Activated CD4-positive, alpha-beta T cell treated with anti-CD3 and anti-CD28 coated beads for 36 hours (primary cell): ENCODE measurements at regions of chr12 and their contacts with region 1.

Region 1: DNA sequence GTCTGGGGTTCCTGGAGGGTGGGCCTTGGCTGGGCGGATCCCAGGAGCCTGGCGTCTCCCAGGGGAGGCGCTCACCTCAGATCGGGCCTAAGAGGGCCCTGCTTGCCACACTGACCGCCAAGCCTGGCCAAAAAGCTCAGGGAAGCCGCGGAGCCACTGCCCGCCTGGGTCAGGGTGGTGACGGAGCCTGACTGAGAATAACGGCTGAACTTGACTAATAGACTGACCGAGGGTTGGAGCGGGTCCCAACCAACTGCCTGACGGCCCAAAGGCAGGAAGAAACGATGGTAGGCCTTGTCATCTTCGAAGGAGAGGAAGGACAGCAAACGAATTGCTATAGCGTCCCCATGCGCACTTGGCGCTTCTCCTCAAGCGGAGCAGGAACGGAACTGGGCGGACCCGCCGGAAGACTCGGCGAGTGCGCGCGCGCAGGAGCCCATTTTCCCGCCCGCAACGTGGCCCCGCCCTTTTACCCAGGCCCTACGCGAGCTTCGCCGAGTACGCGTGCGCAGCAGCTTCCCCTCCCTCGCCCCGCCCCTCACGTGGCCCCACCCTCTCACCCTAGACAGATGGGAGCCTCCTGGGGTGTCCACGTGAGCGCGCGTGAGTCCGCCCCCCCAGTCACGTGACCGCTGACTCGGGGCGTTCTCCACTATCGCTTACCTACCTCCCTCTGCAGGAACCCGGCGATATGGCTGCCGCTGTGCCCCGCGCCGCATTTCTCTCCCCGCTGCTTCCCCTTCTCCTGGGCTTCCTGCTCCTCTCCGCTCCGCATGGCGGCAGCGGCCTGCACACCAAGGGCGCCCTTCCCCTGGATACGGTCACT is at the starts of genes ERP29 and TMEM116:
- DNase-seq: peak; percentile 100
- ATAC-seq: peak; percentile 80
- H3K4me3 Mint-ChIP-seq: peak within 1 kb of the TSS; percentile 98
- H3K27ac Mint-ChIP-seq: peak within 1 kb of the TSS; percentile 99
- H3K4me1 Mint-ChIP-seq: peaks cover 53% of the 10 kb centered on the region
- H3K27me3 Mint-ChIP-seq: no peaks in the 10 kb centered on the region
- total RNA-seq, gene ERP29: 79.7 to 87.3 TPM
- total RNA-seq, gene TMEM116: 11.2 to 12.5 TPM

Region 2: GRCh38 chr12:111589601-111590000 is 423.4 kb before region 1 on chr12:
- CTCF ChIA-PET with region 1: no interaction called
- POLR2A ChIA-PET with region 1: no interaction called
- intact Hi-C with region 1: no loop called
- DNase-seq: no peak
- ATAC-seq: no peak
- H3K4me3 Mint-ChIP-seq: no peak overlapping the region
- H3K27ac Mint-ChIP-seq: no peak overlapping the region
- H3K4me1 Mint-ChIP-seq: peaks cover 11% of the 10 kb centered on the region
- H3K27me3 Mint-ChIP-seq: no peaks in the 10 kb centered on the region

Region 3: GRCh38 chr12:111599459-111600204 is 413.4 kb before region 1 on chr12:
- CTCF ChIA-PET with region 1: no interaction called
- POLR2A ChIA-PET with region 1: no interaction called
- intact Hi-C with region 1: loop called in 1 of 2 experiments (anchors 1 kb)
- DNase-seq: peak; percentile 91
- ATAC-seq: peak; percentile 83
- H3K4me3 Mint-ChIP-seq: peak overlapping the region; percentile 81
- H3K27ac Mint-ChIP-seq: peak overlapping the region; percentile 92
- H3K4me1 Mint-ChIP-seq: peaks cover 17% of the 10 kb centered on the region
- H3K27me3 Mint-ChIP-seq: no peaks in the 10 kb centered on the region

Region 4: GRCh38 chr12:111841750-111842555 is 171.0 kb before region 1 on chr12 and contains the start of gene MAPKAPK5:
- CTCF ChIA-PET with region 1: interaction called, 3 read pairs
- POLR2A ChIA-PET with region 1: no interaction called
- intact Hi-C with region 1: loop called (anchors 1 to 2 kb)
- DNase-seq: peak; percentile 97
- ATAC-seq: peak; percentile 81
- H3K4me3 Mint-ChIP-seq: peak within 1 kb of the TSS; percentile 87
- H3K27ac Mint-ChIP-seq: peak within 1 kb of the TSS; percentile 96
- H3K4me1 Mint-ChIP-seq: peaks cover 50% of the 10 kb centered on the region
- H3K27me3 Mint-ChIP-seq: no peaks in the 10 kb centered on the region
- total RNA-seq, gene MAPKAPK5: 47.5 to 57.5 TPM

Region 5: DNA sequence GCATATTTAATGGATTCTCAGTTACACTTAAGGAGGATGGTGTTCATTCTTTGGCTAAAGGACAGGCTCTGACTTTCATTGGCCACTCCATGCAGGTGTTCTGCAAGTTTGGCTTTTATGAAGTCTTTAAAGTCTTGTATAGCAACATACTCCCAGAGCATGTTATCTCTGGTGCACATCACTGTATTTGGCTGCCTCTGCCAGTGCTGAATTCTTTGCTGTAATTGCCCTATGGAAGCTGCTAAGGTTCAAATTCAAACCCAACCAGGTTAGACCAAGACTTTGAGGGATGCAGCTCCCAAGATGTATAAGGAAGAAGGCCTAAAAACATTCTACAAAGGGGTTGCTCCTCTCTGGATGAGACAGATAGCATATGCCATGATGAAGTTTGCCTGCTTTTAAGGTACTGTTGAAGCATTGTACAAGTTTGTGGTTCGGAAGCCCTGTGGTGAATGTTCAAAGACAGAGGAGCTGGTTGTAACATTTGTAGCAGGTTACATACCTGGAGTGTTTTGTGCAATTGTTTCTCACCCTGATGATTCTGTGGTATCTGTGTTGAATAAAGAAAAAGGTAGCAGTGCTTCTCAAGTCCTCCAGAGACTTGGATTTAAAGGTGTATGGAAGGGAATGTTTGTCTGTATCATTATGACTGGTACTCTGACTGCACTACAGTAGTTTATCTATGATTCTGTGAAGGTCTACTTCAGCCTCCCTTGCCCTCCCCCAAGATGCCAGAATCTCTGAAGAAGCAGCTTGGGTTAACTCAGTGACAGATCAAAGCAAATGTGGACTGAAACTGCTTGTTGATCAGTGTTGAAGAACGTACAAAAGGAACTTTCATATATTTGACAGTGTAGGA is 19.5 kb before region 1 on chr12:
- CTCF ChIA-PET with region 1: interaction called, 10 read pairs
- POLR2A ChIA-PET with region 1: interaction called, 10 read pairs
- intact Hi-C with region 1: loop called (anchors 1 kb)
- DNase-seq: peak; percentile 40
- ATAC-seq: peak; percentile 75
- H3K4me3 Mint-ChIP-seq: peak overlapping the region; percentile 68
- H3K27ac Mint-ChIP-seq: peak overlapping the region; percentile 52
- H3K4me1 Mint-ChIP-seq: peaks cover 68% of the 10 kb centered on the region
- H3K27me3 Mint-ChIP-seq: no peaks in the 10 kb centered on the region

Region 6: GRCh38 chr12:112108201-112109079 is 95.5 kb after region 1 on chr12 and contains the start of gene NAA25:
- CTCF ChIA-PET with region 1: interaction called, 4 read pairs
- POLR2A ChIA-PET with region 1: interaction called, 5 read pairs
- intact Hi-C with region 1: loop called (anchors 1 to 5 kb)
- DNase-seq: peak; percentile 94
- ATAC-seq: peak; percentile 80
- H3K4me3 Mint-ChIP-seq: peak within 1 kb of the TSS; percentile 97
- H3K27ac Mint-ChIP-seq: peak within 1 kb of the TSS; percentile 99
- H3K4me1 Mint-ChIP-seq: peaks cover 55% of the 10 kb centered on the region
- H3K27me3 Mint-ChIP-seq: no peaks in the 10 kb centered on the region
- total RNA-seq, gene NAA25: 50.9 to 58.5 TPM

Region 7: GRCh38 chr12:112130441-112130998 is 117.5 kb after region 1 on chr12:
- CTCF ChIA-PET with region 1: interaction called, 4 read pairs
- POLR2A ChIA-PET with region 1: interaction called, 6 read pairs
- intact Hi-C with region 1: loop called (anchors 1 to 5 kb)
- DNase-seq: no peak
- ATAC-seq: peak; percentile 73
- H3K4me3 Mint-ChIP-seq: peak overlapping the region; percentile 51
- H3K27ac Mint-ChIP-seq: peak overlapping the region; percentile 91
- H3K4me1 Mint-ChIP-seq: peaks cover 56% of the 10 kb centered on the region
- H3K27me3 Mint-ChIP-seq: no peaks in the 10 kb centered on the region

Region 8: DNA sequence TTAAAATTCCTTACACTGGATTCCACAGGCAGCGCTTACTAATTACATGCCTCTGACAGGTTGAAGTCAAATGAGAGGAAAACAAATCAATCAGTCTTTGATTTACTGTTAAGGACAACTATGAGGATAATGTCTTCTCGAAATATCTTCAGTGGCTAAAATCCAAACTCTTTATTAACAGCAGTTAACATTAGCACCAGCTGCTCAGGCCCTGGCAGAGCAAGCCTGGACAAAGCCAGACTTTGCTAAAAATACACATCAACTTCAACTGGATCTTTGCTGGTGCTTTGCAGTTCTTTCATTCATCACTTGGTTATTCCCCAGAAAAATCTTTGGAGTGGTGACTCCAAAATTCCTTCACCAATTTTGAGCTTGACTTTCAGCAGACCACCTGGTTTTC is 270.6 kb after region 1 on chr12:
- CTCF ChIA-PET with region 1: no interaction called
- POLR2A ChIA-PET with region 1: no interaction called
- intact Hi-C with region 1: no loop called
- DNase-seq: no peak
- ATAC-seq: no peak
- H3K4me3 Mint-ChIP-seq: no peak overlapping the region
- H3K27ac Mint-ChIP-seq: no peak overlapping the region
- H3K4me1 Mint-ChIP-seq: no peaks in the 10 kb centered on the region
- H3K27me3 Mint-ChIP-seq: no peaks in the 10 kb centered on the region

Region 9: GRCh38 chr12:112978163-112979040 is 965.4 kb after region 1 on chr12 and contains the start of gene OAS2:
- CTCF ChIA-PET with region 1: no interaction called
- POLR2A ChIA-PET with region 1: no interaction called
- intact Hi-C with region 1: loop called in 1 of 2 experiments (anchors 1 kb)
- DNase-seq: peak; percentile 90
- ATAC-seq: peak; percentile 93
- H3K4me3 Mint-ChIP-seq: peak within 1 kb of the TSS; percentile 100
- H3K27ac Mint-ChIP-seq: peak within 1 kb of the TSS; percentile 100
- H3K4me1 Mint-ChIP-seq: peaks cover 44% of the 10 kb centered on the region
- H3K27me3 Mint-ChIP-seq: no peaks in the 10 kb centered on the region
- total RNA-seq, gene OAS2: 148 to 278 TPM